Breast epithelium (tissue), 4 donors: ENCODE measurements at regions of chr11 and their contacts with region 1.

Region 1: GRCh38 chr11:46278387-46279125 is 1.1 kb downstream of the CREB3L1 start:
- DNase-seq: no peak
- H3K4me3 ChIP-seq: peak overlapping the region; percentile 67 to 80 (median 71)
- H3K27ac ChIP-seq: peak overlapping the region; percentile 65 to 81
- H3K4me1 ChIP-seq: peaks cover 7 to 13% of the 10 kb centered on the region in 2 donors
- H3K27me3 ChIP-seq: no peaks in the 10 kb centered on the region
- CTCF ChIP-seq: peak in 1 of 3 donors; percentile 25
- POLR2A ChIP-seq: no peak

Region 2: GRCh38 chr11:46256540-46257001 is 22.0 kb before region 1 on chr11:
- intact Hi-C with region 1: loop called (anchors 1 kb)
- DNase-seq: no peak
- H3K4me3 ChIP-seq: no peak overlapping the region
- H3K27ac ChIP-seq: no peak overlapping the region
- H3K4me1 ChIP-seq: no peaks in the 10 kb centered on the region
- H3K27me3 ChIP-seq: no peaks in the 10 kb centered on the region
- CTCF ChIP-seq: no peak
- POLR2A ChIP-seq: no peak